CD8-positive, alpha-beta T cell (primary cell): ENCODE measurements at regions of chr6 and their contacts with region 1.

Region 1: DNA sequence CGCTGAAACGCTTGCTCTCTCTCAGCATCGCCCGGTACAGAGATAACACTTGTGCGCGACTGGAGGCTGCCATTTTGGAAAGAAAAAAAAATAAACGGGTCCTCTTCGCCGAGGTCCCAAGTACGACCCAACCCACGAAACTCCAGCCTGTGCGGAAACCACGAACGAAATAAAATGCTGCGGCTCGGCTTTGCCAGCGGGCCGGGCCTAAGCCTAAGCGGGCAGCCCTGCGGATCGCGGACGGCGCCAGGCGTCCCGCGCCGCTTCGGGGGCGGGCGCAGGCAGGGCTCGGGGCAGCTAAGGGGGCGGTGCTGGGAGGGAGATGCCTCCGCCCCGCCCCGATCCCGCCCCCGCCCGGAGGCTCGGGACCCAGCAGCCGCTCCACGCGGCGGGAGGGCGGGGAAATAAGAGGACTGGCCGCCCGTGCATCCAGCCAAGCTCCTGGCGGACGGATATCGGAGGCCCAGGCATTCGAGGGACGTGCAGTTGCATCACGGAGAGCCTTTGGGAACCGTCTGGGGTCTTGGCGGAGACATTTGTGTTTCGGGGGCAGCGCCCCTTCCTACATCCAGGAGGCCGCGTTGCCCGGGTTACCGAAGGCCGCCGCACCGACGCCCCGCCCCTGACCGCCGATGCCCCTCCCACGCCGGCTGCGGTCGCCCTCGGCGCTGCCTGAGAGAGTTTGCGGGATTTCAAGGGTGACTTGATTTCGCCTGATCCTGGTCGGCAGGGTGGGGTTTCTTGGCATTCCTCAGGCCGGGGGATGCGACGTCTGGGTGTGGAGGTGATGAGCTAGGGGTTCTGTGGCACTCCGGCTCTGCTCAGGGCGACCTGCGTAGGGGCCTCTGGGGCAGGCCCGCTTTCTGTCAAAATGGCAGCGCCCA is at the starts of genes FARS2 and LYRM4:
- DNase-seq: peak; percentile 86 to 98 (median 92)
- ATAC-seq: peak; percentile 82
- H3K4me3 ChIP-seq: peak within 1 kb of the TSS; percentile 93
- H3K4me3 Mint-ChIP-seq: peak within 1 kb of the TSS; percentile 98
- H3K27ac ChIP-seq: peak within 1 kb of the TSS; percentile 97 to 99
- H3K27ac Mint-ChIP-seq: peak within 1 kb of the TSS; percentile 100
- H3K4me1 ChIP-seq: peaks cover 17% of the 10 kb centered on the region
- H3K4me1 Mint-ChIP-seq: peaks cover 37% of the 10 kb centered on the region
- H3K27me3 ChIP-seq: no peaks in the 10 kb centered on the region
- H3K27me3 Mint-ChIP-seq: no peaks in the 10 kb centered on the region
- CTCF ChIP-seq: no peak
- total RNA-seq, gene FARS2: 9.1 to 10.5 TPM
- total RNA-seq, gene LYRM4: 23.4 to 24.3 TPM

Region 2: GRCh38 chr6:4809999-4810918 is 450.6 kb before region 1 on chr6:
- CTCF ChIA-PET with region 1: no interaction called
- POLR2A ChIA-PET with region 1: no interaction called
- intact Hi-C with region 1: no loop called
- DNase-seq: no peak
- ATAC-seq: no peak
- H3K4me3 ChIP-seq: no peak overlapping the region
- H3K4me3 Mint-ChIP-seq: no peak overlapping the region
- H3K27ac ChIP-seq: no peak overlapping the region
- H3K27ac Mint-ChIP-seq: no peak overlapping the region
- H3K4me1 ChIP-seq: peaks cover 40% of the 10 kb centered on the region
- H3K4me1 Mint-ChIP-seq: peaks cover 83% of the 10 kb centered on the region
- H3K27me3 ChIP-seq: no peaks in the 10 kb centered on the region
- H3K27me3 Mint-ChIP-seq: no peaks in the 10 kb centered on the region
- CTCF ChIP-seq: no peak

Region 3: GRCh38 chr6:5003604-5004372 is 257.1 kb before region 1 on chr6 and contains the start of gene RPP40:
- CTCF ChIA-PET with region 1: no interaction called
- POLR2A ChIA-PET with region 1: no interaction called
- intact Hi-C with region 1: loop called in 1 of 2 experiments (anchors 1 kb)
- DNase-seq: peak; percentile 97 to 99 (median 98)
- ATAC-seq: peak; percentile 94
- H3K4me3 ChIP-seq: peak within 1 kb of the TSS; percentile 80 to 95
- H3K4me3 Mint-ChIP-seq: peak within 1 kb of the TSS; percentile 94
- H3K27ac ChIP-seq: peak within 1 kb of the TSS; percentile 79 to 82
- H3K27ac Mint-ChIP-seq: peak within 1 kb of the TSS; percentile 97
- H3K4me1 ChIP-seq: peaks cover 8% of the 10 kb centered on the region
- H3K4me1 Mint-ChIP-seq: peaks cover 13% of the 10 kb centered on the region
- H3K27me3 ChIP-seq: no peaks in the 10 kb centered on the region
- H3K27me3 Mint-ChIP-seq: no peaks in the 10 kb centered on the region
- CTCF ChIP-seq: peak; percentile 84
- total RNA-seq, gene RPP40: 0.94 to 1.2 TPM

Region 4: GRCh38 chr6:5174244-5174643 is 86.7 kb before region 1 on chr6:
- CTCF ChIA-PET with region 1: interaction called, 3 read pairs
- POLR2A ChIA-PET with region 1: interaction called, 18 read pairs
- intact Hi-C with region 1: loop called (anchors 1 to 5 kb)
- DNase-seq: peak; percentile 13 to 85 (median 56)
- ATAC-seq: peak; percentile 87
- H3K4me3 ChIP-seq: peak overlapping the region; percentile 30 to 48
- H3K4me3 Mint-ChIP-seq: peak overlapping the region; percentile 68
- H3K27ac ChIP-seq: peak overlapping the region; percentile 66 to 91
- H3K27ac Mint-ChIP-seq: peak overlapping the region; percentile 89
- H3K4me1 ChIP-seq: peaks cover 45% of the 10 kb centered on the region
- H3K4me1 Mint-ChIP-seq: peaks cover 56% of the 10 kb centered on the region
- H3K27me3 ChIP-seq: no peaks in the 10 kb centered on the region
- H3K27me3 Mint-ChIP-seq: no peaks in the 10 kb centered on the region
- CTCF ChIP-seq: no peak

Region 5: GRCh38 chr6:5995949-5996713 is 735.2 kb after region 1 on chr6:
- CTCF ChIA-PET with region 1: no interaction called
- POLR2A ChIA-PET with region 1: no interaction called
- intact Hi-C with region 1: loop called in 1 of 2 experiments (anchors 5 kb)
- DNase-seq: peak in 2 of 9 experiments; percentile 21 to 35
- ATAC-seq: peak; percentile 22
- H3K4me3 ChIP-seq: peak overlapping the region; percentile 52 to 59
- H3K4me3 Mint-ChIP-seq: peak overlapping the region; percentile 92
- H3K27ac ChIP-seq: no peak overlapping the region
- H3K27ac Mint-ChIP-seq: no peak overlapping the region
- H3K4me1 ChIP-seq: peaks cover 52% of the 10 kb centered on the region
- H3K4me1 Mint-ChIP-seq: peaks cover 51% of the 10 kb centered on the region
- H3K27me3 ChIP-seq: peaks cover 69 to 77% of the 10 kb centered on the region in 2 experiments
- H3K27me3 Mint-ChIP-seq: peaks cover 75% of the 10 kb centered on the region
- CTCF ChIP-seq: no peak